ENCODE measurements at regions of chrX and their contacts with region 1.

Region 1: DNA sequence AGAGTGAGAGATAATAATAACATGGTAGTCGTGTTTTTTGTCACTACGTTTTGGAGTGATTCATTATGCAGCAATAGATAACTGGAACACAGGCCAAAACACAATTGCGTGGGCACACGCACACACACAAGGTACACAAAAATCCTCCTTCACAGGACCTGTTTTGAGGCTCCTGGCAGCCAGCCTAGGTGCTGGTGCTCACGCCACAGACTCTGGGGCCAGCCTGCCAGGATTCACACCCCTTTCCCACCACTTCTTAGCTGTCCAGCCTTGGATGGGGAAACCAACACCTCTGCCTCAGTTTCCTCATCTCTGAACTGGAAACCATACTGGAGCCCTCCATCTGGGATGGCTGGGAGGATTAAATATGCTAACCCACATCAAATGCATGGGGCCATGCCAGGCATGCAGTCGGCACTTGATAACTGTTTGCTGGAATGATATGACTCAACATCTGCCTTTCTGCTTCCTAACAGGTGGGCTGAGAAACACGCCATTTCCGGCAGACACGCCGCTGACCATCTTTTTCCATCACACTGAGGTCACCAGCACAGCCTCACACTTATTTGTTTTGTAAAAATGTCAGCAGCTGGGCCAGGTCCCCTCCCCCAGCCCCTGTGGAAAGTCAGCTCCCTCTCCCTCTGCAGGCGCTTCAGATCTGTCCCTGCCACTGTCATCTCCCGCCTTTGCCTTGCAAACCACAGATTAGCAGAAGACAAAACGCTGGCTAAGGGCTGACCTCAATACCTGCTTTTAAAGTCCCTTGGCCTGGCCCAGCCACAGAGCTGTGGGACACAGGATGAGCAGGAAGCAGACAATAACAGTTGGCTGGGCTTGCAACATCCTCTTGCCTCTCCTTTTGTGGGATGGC is 237.5 kb downstream of the BCOR start:
- DNase-seq: peak; percentile 92
- ATAC-seq: peak; percentile 65
- H3K4me3 Mint-ChIP-seq: peak overlapping the region; percentile 39
- H3K27ac Mint-ChIP-seq: peak overlapping the region; percentile 93
- H3K4me1 Mint-ChIP-seq: peaks cover 54% of the 10 kb centered on the region
- H3K27me3 Mint-ChIP-seq: no peaks in the 10 kb centered on the region

Region 2: DNA sequence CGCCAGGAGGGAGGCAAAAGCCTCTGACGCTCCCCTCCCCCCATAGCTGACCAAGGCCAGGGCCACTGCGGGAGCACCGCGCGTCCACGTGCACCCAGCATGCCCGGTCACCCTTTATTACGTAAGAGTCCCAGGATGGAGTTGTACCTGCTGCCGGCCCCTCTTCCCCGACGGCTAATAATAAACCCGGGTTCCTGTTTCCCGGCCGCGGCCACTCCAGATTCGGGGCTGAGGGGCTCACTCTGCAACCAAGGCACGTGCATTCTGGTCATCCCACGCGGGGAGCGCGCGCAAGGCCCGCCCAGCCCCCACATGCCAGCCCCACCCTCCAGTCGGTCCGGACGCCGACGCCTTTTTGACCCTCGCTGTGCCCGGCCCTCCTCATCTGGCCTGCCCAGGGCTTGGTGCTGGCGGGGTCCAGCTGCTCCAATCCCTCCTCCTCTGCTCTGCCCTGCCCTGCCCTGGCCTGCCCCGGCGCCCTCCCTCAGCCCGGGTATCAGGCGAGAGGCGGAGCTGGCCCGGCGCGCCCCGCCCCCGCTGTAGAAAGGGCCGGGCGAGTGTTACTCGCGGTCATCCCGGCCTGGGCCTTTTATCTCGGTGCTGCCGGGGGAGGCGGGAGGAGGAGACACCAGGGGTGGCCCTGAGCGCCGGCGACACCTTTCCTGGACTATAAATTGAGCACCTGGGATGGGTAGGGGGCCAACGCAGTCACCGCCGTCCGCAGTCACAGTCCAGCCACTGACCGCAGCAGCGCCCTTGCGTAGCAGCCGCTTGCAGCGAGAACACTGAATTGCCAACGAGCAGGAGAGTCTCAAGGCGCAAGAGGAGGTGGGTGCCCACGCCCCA is 1056.4 kb before region 1 on chrX:
- CTCF ChIA-PET with region 1: no interaction called
- POLR2A ChIA-PET with region 1: no interaction called
- intact Hi-C with region 1: loop called in 1 of 2 experiments (anchors 5 kb)
- DNase-seq: peak; percentile 87
- ATAC-seq: peak; percentile 68
- H3K4me3 Mint-ChIP-seq: peak overlapping the region; percentile 95
- H3K27ac Mint-ChIP-seq: peak overlapping the region; percentile 96
- H3K4me1 Mint-ChIP-seq: peaks cover 15% of the 10 kb centered on the region
- H3K27me3 Mint-ChIP-seq: no peaks in the 10 kb centered on the region

Region 3: GRCh38 chrX:39309018-39309635 is 551.1 kb before region 1 on chrX:
- CTCF ChIA-PET with region 1: no interaction called
- POLR2A ChIA-PET with region 1: no interaction called
- intact Hi-C with region 1: loop called in 1 of 2 experiments (anchors 5 kb)
- DNase-seq: peak; percentile 77
- ATAC-seq: peak; percentile 86
- H3K4me3 Mint-ChIP-seq: peak overlapping the region; percentile 51
- H3K27ac Mint-ChIP-seq: peak overlapping the region; percentile 100
- H3K4me1 Mint-ChIP-seq: peaks cover 77% of the 10 kb centered on the region
- H3K27me3 Mint-ChIP-seq: no peaks in the 10 kb centered on the region

Region 4: DNA sequence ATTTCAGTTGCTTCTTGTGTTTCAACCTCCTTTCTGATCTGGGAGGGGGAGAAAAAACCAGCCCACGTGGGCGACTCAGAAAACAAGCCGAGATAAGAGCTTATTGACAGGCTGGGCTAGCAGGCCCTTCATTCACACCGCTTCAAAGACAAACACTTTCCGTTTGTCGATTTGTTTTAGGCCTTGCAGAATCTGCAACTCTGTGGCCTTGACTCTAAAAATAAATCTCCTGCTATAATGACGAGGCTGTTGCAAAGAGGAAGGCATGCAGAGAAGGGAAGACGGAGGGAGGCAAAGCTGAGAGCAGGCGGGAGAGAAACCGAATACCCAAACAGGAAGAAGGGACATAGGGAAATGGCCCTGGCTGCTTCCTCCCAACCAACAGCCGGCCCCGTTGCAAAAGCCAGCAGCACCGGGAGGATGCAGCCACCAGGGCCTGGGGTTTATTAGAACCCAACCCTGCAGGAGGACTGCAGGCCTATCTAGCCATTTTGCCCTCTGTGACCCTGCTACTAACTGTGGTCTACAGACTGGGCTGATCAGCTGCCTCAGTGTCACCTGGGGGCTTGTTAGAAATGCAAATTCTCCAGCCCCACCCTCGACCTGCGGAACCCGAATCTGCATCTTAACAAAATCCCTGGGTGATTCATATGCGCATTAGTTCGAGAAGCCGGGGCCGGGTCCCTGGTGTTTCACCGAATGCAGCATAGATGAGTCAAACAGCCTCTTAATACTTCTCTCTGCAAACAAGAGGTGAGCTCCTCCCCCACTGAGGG is 88.0 kb before region 1 on chrX:
- CTCF ChIA-PET with region 1: no interaction called
- POLR2A ChIA-PET with region 1: interaction called, 3 read pairs
- intact Hi-C with region 1: loop called (anchors 1 to 2 kb)
- DNase-seq: peak; percentile 84
- ATAC-seq: peak; percentile 71
- H3K4me3 Mint-ChIP-seq: peak overlapping the region; percentile 39
- H3K27ac Mint-ChIP-seq: peak overlapping the region; percentile 94
- H3K4me1 Mint-ChIP-seq: peaks cover 42% of the 10 kb centered on the region
- H3K27me3 Mint-ChIP-seq: no peaks in the 10 kb centered on the region

Region 5: GRCh38 chrX:39883666-39884065 is 23.4 kb after region 1 on chrX:
- CTCF ChIA-PET with region 1: no interaction called
- POLR2A ChIA-PET with region 1: interaction called, 7 read pairs
- intact Hi-C with region 1: loop called in 1 of 2 experiments (anchors 1 kb)
- DNase-seq: peak; percentile 72
- ATAC-seq: peak; percentile 96
- H3K4me3 Mint-ChIP-seq: no peak overlapping the region
- H3K27ac Mint-ChIP-seq: peak overlapping the region; percentile 78
- H3K4me1 Mint-ChIP-seq: peaks cover 19% of the 10 kb centered on the region
- H3K27me3 Mint-ChIP-seq: peaks cover 2% of the 10 kb centered on the region

Region 6: GRCh38 chrX:39921838-39922237 is 61.6 kb after region 1 on chrX:
- CTCF ChIA-PET with region 1: no interaction called
- POLR2A ChIA-PET with region 1: no interaction called
- intact Hi-C with region 1: no loop called
- DNase-seq: no peak
- ATAC-seq: no peak
- H3K4me3 Mint-ChIP-seq: no peak overlapping the region
- H3K27ac Mint-ChIP-seq: no peak overlapping the region
- H3K4me1 Mint-ChIP-seq: peaks cover 6% of the 10 kb centered on the region
- H3K27me3 Mint-ChIP-seq: no peaks in the 10 kb centered on the region

Region 7: GRCh38 chrX:40013266-40014195 is 153.3 kb after region 1 on chrX:
- CTCF ChIA-PET with region 1: no interaction called
- POLR2A ChIA-PET with region 1: no interaction called
- intact Hi-C with region 1: loop called (anchors 5 kb)
- DNase-seq: peak; percentile 58
- ATAC-seq: peak; percentile 35
- H3K4me3 Mint-ChIP-seq: peak overlapping the region; percentile 63
- H3K27ac Mint-ChIP-seq: peak overlapping the region; percentile 31
- H3K4me1 Mint-ChIP-seq: peaks cover 25% of the 10 kb centered on the region
- H3K27me3 Mint-ChIP-seq: peaks cover 16% of the 10 kb centered on the region